Esophagus muscularis mucosa (tissue), 4 donors: ENCODE measurements at regions of chr22 and their contacts with region 1.

Region 1: GRCh38 chr22:50030297-50031188 is 18.0 kb upstream of the IL17REL start:
- DNase-seq: no peak
- H3K4me3 ChIP-seq: peak overlapping the region in 1 of 4 donors; percentile 9
- H3K27ac ChIP-seq: no peak overlapping the region
- H3K4me1 ChIP-seq: peaks cover 5 to 11% (median 9%) of the 10 kb centered on the region in 4 donors
- H3K27me3 ChIP-seq: peaks cover 0 to 84% (median 5%) of the 10 kb centered on the region in 4 donors
- CTCF ChIP-seq: peak; percentile 80 to 94 (median 83)
- EP300 ChIP-seq: no peak
- POLR2A ChIP-seq: no peak

Region 2: GRCh38 chr22:49767355-49768062 is 263.0 kb before region 1 on chr22:
- intact Hi-C with region 1: loop called (anchors 10 kb)
- DNase-seq: no peak
- H3K4me3 ChIP-seq: no peak overlapping the region
- H3K27ac ChIP-seq: no peak overlapping the region
- H3K4me1 ChIP-seq: peaks cover 0 to 17% (median 12%) of the 10 kb centered on the region in 4 donors
- H3K27me3 ChIP-seq: no peaks in the 10 kb centered on the region
- CTCF ChIP-seq: peak; percentile 46 to 74 (median 59)
- EP300 ChIP-seq: no peak
- POLR2A ChIP-seq: no peak